ENCODE measurements at regions of chr11 and their contacts with region 1.

Region 1: DNA sequence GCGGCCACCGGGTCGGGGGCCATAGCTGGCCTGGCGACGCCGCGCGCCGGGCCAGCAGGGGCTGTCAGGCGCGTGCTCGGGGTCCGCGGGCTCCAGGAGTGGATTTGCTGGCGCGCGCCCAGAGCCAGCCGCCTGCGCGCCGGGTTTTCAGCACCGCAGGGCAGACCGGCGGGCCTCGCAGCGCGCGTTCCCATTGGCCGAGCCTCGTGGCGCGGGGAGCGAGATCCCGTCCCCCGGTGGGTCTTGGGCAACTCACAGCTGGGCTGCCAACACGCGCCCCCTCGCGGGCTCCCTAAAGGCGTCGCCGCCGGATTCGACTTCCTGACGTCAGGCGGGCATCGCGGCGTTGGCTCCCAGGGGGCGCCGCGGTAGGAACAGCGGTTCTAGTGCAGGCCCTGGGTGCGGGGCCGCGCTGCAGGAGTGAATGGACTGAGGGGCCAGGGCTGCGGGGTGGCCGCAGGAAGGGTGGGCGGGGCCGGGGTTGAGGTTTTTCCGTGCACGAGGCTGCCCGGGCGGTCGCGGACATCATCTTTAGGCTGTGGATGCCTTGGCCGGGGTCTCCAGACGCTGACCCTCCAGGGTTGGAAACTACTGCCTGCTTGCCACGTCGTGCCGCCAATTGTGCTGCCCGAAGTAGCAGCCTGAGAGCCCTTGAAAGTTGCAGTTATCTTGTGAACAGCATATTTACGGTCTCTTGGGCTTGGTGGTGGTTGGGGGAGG is at the start of gene FADS1:
- DNase-seq: peak; percentile 92
- H3K4me3 Mint-ChIP-seq: peak within 1 kb of the TSS; percentile 83
- H3K27ac Mint-ChIP-seq: peak within 1 kb of the TSS; percentile 65
- H3K4me1 Mint-ChIP-seq: peaks cover 10% of the 10 kb centered on the region
- H3K27me3 Mint-ChIP-seq: peaks cover 12% of the 10 kb centered on the region
- total RNA-seq, gene FADS1: 24.9 to 26.5 TPM

Region 2: DNA sequence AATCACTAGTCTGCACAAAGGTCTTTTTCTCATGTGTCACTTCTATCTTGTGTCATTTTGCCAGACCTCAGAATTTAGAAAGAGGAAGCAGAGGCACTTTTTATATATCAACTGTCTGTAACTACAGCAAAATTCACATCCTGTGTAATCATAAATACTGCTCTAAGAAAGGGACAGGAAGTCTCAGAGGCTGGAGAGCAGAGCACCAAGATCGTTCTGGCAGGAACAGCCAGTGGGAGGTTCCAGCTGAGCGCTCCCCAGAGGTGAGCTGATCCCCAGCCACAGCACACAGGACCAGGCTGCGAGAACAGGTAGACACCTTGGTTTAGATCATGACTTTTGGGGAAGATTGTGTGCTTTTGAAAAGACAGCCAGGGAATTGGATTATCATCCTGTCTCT is 1438.5 kb before region 1 on chr11 and contains the start of gene MS4A7:
- CTCF ChIA-PET with region 1: no interaction called
- POLR2A ChIA-PET with region 1: no interaction called
- intact Hi-C with region 1: no loop called
- DNase-seq: no peak
- H3K4me3 Mint-ChIP-seq: no peak within 1 kb of the TSS
- H3K27ac Mint-ChIP-seq: no peak within 1 kb of the TSS
- H3K4me1 Mint-ChIP-seq: no peaks in the 10 kb centered on the region
- H3K27me3 Mint-ChIP-seq: peaks cover 19% of the 10 kb centered on the region
- total RNA-seq, gene MS4A7: not detected

Region 3: GRCh38 chr11:61752117-61752924 is 64.6 kb before region 1 on chr11 and contains the start of gene MYRF:
- CTCF ChIA-PET with region 1: no interaction called
- POLR2A ChIA-PET with region 1: no interaction called
- intact Hi-C with region 1: no loop called
- DNase-seq: peak; percentile 71
- H3K4me3 Mint-ChIP-seq: peak within 1 kb of the TSS; percentile 49
- H3K27ac Mint-ChIP-seq: no peak within 1 kb of the TSS
- H3K4me1 Mint-ChIP-seq: peaks cover 18% of the 10 kb centered on the region
- H3K27me3 Mint-ChIP-seq: peaks cover 28% of the 10 kb centered on the region
- total RNA-seq, gene MYRF: 1.2 to 1.4 TPM

Region 4: GRCh38 chr11:61827571-61828378 is 10.9 kb after region 1 on chr11 and contains the start of gene FADS2:
- CTCF ChIA-PET with region 1: interaction called, 20 read pairs
- POLR2A ChIA-PET with region 1: interaction called, 4 read pairs
- intact Hi-C with region 1: loop called (anchors 1 kb)
- DNase-seq: peak; percentile 89
- H3K4me3 Mint-ChIP-seq: peak within 1 kb of the TSS; percentile 85
- H3K27ac Mint-ChIP-seq: peak within 1 kb of the TSS; percentile 52
- H3K4me1 Mint-ChIP-seq: peaks cover 8% of the 10 kb centered on the region
- H3K27me3 Mint-ChIP-seq: peaks cover 15% of the 10 kb centered on the region
- total RNA-seq, gene FADS2: 58.2 to 60.8 TPM

Region 5: DNA sequence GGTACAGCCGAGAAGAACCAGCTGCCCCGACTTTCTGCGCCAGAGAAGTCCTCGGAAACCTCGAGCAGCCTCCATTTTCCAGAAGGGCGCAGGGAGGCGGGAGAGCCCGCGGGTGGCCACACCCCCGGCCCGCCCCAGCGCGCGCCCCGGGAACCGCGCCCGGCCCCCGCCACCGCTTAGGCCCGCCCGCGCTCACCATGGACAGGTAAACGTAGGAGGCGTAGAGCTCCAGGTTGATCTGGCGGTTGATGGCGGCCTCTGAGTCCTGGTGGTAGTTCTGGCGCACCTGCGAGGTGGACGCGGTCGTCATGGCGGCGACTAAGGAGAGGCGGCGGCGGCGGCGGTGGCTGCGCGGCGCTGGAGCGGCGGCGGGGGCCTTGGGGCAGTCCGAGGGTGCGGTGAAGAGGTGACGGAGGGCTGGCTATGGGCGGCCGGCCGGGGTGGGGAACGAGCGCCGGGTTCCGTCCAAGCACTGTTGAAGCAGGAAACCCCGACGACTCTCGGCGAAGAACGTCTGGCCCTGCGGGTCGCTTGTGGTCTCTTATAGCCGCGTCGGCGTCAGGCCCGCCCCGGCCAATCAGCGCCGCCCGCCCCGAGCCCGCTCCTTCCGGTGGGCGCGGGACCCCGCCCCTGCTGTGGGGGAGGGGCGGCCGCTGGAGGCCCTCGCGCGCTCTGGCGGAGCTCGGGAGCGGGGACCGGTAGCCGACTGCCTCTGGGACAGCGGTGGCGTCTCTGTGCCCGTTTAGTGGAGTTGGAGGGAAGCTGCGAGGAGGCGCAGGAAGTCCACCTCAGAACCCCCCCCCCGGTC is 150.4 kb after region 1 on chr11 and contains the start of gene FTH1:
- CTCF ChIA-PET with region 1: no interaction called
- POLR2A ChIA-PET with region 1: interaction called, 3 read pairs
- intact Hi-C with region 1: loop called (anchors 5 kb)
- DNase-seq: peak; percentile 90
- H3K4me3 Mint-ChIP-seq: peak within 1 kb of the TSS; percentile 84
- H3K27ac Mint-ChIP-seq: peak within 1 kb of the TSS; percentile 93
- H3K4me1 Mint-ChIP-seq: peaks cover 68% of the 10 kb centered on the region
- H3K27me3 Mint-ChIP-seq: no peaks in the 10 kb centered on the region
- total RNA-seq, gene FTH1: 915 to 922 TPM